RWPE1 (cell line): ENCODE measurements at regions of chr20 and their contacts with region 1.

Region 1: GRCh38 chr20:48657475-48658470 is 170.0 kb downstream of the PREX1 start:
- DNase-seq: peak; percentile 95
- H3K27ac ChIP-seq: no peak overlapping the region
- CTCF ChIP-seq: peak; percentile 99

Region 2: DNA sequence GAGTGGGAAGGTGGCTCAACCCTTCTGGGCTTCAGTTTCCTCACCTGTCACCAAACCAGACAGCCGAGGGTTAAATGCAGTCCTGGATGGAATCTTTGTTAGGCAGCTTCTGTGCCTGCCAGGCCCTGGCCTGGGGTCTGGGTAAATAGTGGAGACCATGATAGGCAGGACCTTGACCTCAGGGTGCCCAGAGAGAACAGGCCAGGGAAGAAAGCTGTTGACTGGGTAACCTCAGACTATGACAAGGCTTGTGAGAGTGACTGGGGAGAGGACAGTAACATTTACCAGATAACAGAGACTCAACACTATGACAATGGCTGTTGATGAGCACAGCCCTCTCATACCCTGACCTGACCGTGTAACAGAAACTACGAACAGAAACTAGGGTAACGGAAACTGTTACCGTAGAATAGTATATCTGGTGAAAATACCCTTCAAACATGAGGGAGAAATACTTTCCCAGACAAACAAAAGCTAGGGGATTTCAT is 48.2 kb before region 1 on chr20:
- CTCF ChIA-PET with region 1: no interaction called
- POLR2A ChIA-PET with region 1: no interaction called
- DNase-seq: no peak
- H3K27ac ChIP-seq: no peak overlapping the region
- CTCF ChIP-seq: no peak

Region 3: DNA sequence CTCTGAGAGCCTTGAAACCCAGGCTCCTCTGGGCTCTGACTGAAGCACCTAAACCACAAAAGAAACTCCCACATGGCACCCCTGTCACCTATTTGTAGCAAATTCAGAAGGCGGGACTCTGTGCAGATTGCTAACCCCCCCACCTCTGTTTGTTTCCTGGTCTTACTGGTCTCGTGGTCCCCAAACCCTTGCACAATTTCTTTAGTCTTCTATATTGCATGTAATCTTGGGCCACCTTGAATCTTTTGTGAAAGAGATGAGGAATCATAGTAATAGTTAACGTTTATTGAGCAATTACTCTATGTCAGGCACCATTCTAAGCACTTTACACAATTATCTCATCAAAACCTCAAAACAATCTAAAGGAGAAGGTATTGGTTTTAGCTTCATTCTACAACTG is 15.8 kb after region 1 on chr20:
- CTCF ChIA-PET with region 1: interaction called, 22 read pairs
- POLR2A ChIA-PET with region 1: no interaction called
- DNase-seq: no peak
- H3K27ac ChIP-seq: no peak overlapping the region
- CTCF ChIP-seq: no peak

Region 4: GRCh38 chr20:48709744-48710695 is 52.2 kb after region 1 on chr20:
- CTCF ChIA-PET with region 1: interaction called, 11 read pairs
- POLR2A ChIA-PET with region 1: no interaction called
- DNase-seq: no peak
- H3K27ac ChIP-seq: no peak overlapping the region
- CTCF ChIP-seq: no peak

Region 5: GRCh38 chr20:48879609-48880245 is 222.0 kb after region 1 on chr20:
- CTCF ChIA-PET with region 1: interaction called, 10 read pairs
- POLR2A ChIA-PET with region 1: no interaction called
- DNase-seq: no peak
- H3K27ac ChIP-seq: no peak overlapping the region
- CTCF ChIP-seq: no peak

Region 6: DNA sequence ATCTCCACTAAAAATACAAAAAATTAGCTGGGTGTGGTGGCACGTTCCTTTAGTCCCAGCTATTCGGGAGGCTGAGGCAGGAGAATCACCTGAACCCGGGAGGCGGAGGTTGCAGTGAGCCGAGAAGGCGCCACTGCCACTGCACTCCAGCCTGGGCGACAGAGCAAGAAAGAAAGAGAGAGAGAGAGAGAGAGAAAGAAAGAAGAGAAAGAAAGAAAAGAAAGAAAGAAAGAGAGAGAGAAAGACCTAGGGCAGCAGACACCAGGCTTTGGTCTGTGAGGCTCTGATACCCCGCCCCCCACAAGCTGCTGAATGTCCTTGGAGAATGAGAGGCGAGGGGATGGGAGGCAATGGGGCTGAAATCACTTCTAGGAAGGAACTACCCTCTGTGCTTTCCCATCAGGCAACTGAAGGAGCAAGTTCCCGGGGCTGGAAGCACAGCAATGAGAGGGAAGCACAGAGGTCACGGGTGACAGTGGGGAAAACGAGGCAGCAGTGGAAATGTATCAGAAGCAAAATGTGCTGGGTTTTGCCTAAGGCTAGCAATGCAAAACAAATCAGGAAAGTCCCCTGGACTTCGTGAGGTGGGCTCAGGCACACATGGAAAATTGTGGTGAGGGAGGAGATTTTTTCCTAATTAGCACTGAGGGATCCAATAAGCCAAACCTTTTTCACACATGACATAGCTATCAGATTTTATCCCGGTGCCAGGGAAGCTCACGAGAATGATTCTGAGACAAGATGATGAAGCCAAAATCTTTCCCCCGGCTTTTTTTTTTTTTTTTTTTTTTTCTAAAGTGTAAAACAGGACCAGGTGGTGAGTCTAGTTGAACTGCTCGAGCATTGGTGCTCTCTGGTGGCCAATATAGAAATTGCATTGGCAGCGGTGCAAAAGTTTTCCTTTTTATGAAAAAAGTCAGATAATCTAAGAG is 246.9 kb after region 1 on chr20:
- CTCF ChIA-PET with region 1: interaction called, 155 read pairs
- POLR2A ChIA-PET with region 1: no interaction called
- DNase-seq: peak; percentile 86
- H3K27ac ChIP-seq: no peak overlapping the region
- CTCF ChIP-seq: peak; percentile 97